ENCODE measurements at regions of chr5 and their contacts with region 1.

Region 1: DNA sequence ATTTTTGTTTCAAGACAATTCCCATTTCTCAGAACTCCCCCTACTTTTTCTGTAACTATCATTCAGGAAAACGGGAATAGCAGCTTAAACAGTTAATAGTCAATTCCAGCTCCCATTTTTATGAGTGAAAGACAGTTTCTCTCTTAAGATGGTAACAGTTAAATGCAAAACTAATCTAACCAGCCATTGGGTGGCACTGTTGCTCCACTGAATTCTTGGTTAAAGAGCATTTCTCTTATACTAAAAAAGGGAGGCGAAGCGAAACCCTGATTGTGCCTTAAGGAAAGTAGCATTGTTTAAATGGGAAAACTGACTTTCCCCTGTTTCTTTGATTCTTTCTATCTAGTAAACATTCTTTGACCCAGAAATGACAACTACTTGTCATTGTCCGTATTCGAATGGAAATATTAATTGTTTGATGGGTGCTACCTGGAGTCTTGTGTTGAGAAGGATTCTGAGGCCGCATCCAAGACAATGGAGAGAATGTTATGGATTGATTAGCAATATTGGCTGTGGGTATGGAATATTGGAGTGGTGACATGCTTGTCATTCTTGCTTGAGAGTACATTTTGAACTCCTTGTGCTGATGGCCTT is 507.8 kb downstream of the MAT2B start:
- DNase-seq: peak; percentile 68
- H3K4me3 ChIP-seq: no peak overlapping the region
- H3K27ac ChIP-seq: no peak overlapping the region
- H3K4me1 ChIP-seq: peaks cover 4% of the 10 kb centered on the region
- CTCF ChIP-seq: peak; percentile 89

Region 2: DNA sequence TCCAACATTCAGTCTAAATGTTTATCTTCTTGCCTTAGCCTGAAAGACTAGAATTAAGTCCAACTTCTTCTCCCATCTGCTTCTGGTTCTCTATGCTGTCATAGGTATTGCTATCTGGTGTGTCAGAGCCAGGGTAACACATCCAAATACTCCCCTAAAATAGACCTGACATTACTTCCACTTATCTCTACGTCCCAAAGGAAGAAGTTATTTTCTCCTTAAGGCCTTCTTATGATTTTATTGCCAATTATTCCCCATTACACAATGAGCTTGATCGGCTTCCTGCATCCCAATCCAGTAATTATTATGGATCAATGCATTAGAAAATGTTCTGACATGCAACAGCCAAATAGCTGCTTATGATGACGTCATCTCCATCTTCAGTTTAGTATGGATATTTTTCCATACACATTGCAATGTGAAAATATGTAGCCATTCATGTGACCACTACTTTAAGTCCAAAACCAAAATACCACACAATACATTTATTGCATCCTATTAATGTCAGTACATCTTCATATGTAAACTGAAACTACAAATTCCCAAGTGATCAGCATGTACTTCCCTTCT is 47.7 kb after region 1 on chr5:
- CTCF ChIA-PET with region 1: no interaction called
- POLR2A ChIA-PET with region 1: no interaction called
- intact Hi-C with region 1: no loop called
- DNase-seq: no peak
- H3K4me3 ChIP-seq: no peak overlapping the region
- H3K27ac ChIP-seq: no peak overlapping the region
- H3K4me1 ChIP-seq: no peaks in the 10 kb centered on the region
- CTCF ChIP-seq: no peak

Region 3: DNA sequence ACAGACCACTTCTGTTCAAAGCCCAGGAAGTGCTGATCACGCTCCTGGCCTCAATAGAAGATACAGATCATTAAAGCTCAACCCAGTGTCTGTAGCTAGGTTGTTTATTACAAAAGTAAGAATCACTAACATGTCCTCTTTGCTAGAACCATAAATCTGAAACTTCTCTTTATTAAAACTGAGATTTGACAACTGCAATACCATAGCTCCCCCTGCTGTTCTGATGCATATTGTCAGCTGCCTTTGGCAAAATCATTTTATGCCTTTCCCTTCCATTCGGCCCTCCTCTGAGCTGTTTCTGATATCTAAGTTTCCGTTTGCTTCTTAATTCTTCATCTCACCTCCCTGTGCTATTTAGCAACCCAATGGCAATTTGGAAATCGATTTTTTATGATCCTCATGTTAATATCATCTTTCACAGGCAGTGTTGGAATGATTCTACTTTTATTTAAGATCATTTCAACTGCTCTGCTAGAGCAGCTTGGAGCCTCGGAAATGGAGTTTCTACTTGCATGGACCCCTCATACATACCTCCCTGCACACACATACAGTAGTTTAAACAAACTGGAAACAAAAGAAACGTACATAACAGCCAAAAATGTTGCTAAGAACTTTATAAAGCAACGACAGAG is 491.1 kb after region 1 on chr5:
- CTCF ChIA-PET with region 1: no interaction called
- POLR2A ChIA-PET with region 1: interaction called, 3 read pairs
- intact Hi-C with region 1: loop called (anchors 1 kb)
- DNase-seq: peak; percentile 55
- H3K4me3 ChIP-seq: no peak overlapping the region
- H3K27ac ChIP-seq: no peak overlapping the region
- H3K4me1 ChIP-seq: no peaks in the 10 kb centered on the region
- CTCF ChIP-seq: peak; percentile 86

Region 4: GRCh38 chr5:165209086-165209727 is 1196.0 kb after region 1 on chr5:
- CTCF ChIA-PET with region 1: no interaction called
- POLR2A ChIA-PET with region 1: no interaction called
- intact Hi-C with region 1: loop called (anchors 5 kb)
- DNase-seq: peak; percentile 16
- H3K4me3 ChIP-seq: no peak overlapping the region
- H3K27ac ChIP-seq: no peak overlapping the region
- H3K4me1 ChIP-seq: no peaks in the 10 kb centered on the region
- CTCF ChIP-seq: peak; percentile 96

Measured in OCI-LY7 (cell line).